Adrenal gland (tissue), 19 donors: ENCODE measurements at regions of chr5 and their contacts with region 1.

Region 1: DNA sequence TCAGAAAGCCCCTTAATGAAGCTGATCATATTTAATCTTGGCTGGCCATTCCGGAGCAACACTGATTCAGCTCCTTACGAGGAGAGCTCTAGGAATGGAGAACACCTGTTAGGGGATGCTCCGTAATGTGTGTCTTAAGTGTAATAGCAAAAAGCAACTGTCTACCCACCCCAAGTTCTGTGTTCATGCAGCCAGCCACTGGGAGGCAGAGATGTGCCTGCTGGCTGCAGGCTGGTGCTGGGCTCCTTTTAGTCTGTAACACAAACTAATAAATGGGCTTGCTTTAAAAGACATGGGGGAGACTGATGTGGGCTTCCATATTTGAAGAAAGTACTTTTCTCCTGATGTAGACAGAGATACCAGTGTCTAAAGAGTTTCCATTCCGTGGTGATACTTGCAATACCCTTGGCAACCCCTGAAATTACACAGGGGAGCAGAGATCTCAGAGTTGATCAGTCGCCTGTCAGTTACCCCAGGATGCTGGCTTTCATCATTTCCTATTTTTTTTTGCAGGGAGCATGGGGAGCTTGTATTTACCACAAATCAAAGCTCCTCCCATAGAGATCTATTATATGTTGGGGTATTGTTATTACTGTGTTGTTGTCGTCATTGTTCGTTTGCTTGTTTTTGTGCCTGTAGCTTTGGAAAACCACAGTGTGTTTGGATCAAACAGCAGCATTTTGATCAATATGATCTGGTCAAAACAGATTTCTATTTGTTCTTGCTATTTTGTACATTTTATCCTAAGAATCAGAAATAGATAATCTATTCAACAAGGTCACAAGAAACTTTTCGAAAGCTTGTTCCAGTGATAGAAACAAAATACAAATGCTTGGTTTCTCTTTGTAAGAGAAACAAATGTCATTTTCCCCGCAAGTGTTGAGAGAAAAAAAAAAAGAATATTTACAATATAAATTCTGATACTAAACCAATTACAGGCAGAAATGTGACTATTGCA is 65.8 kb downstream of the MTX3 start:
- DNase-seq: peak in 5 of 7 donors; percentile 29 to 63 (median 32)
- H3K4me3 ChIP-seq: no peak overlapping the region
- H3K27ac ChIP-seq: no peak overlapping the region
- H3K4me1 ChIP-seq: no peaks in the 10 kb centered on the region
- H3K27me3 ChIP-seq: no peaks in the 10 kb centered on the region
- CTCF ChIP-seq: peak; percentile 15 to 53 (median 43)
- POLR2A ChIP-seq: no peak

Region 2: GRCh38 chr5:80076112-80077050 is 151.2 kb after region 1 on chr5:
- intact Hi-C with region 1: loop called in 1 of 2 experiments (anchors 5 kb)
- DNase-seq: no peak
- H3K4me3 ChIP-seq: no peak overlapping the region
- H3K27ac ChIP-seq: no peak overlapping the region
- H3K4me1 ChIP-seq: no peaks in the 10 kb centered on the region
- H3K27me3 ChIP-seq: no peaks in the 10 kb centered on the region
- CTCF ChIP-seq: no peak
- POLR2A ChIP-seq: no peak